ENCODE measurements at regions of chr1 and their contacts with region 1.

Region 1: DNA sequence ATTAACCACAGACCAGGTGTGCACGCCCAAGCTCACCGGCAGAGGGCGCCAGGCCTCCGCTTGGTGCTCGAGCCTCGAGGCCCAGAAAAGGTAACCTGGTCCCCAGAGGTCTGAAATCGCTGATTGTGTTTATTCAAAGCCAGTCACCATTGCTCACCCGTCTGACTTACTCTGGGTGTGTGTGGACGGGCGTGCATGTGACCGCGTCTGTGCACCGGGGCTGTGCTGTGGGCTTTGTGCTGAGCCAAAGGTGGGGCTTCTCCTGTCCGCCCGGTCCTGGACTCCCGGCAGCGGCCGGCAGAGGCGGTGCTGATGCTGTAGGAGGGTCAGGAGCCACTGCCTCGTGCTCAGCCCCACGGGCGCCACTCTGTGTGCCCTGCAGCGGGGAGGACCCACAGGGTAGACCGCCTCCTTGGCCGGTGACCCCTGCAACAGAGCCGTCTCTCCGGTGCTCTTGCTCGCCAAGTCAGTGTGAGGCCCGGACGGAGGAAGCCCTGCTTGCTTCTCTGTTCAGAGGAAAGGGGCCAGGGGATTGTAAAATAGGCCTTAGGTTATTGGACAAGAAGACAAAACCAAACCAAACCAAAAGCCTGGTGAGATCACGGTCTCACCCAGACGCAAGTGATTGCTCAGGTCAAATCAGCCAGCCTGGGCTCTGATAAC is 32.0 kb upstream of the BTG2 start:
- DNase-seq: peak; percentile 90
- ATAC-seq: peak; percentile 70
- H3K4me3 Mint-ChIP-seq: peak overlapping the region; percentile 59
- H3K27ac Mint-ChIP-seq: no peak overlapping the region
- H3K4me1 Mint-ChIP-seq: peaks cover 13% of the 10 kb centered on the region
- H3K27me3 Mint-ChIP-seq: peaks cover 47% of the 10 kb centered on the region
- CTCF ChIP-seq: peak; percentile 97

Region 2: DNA sequence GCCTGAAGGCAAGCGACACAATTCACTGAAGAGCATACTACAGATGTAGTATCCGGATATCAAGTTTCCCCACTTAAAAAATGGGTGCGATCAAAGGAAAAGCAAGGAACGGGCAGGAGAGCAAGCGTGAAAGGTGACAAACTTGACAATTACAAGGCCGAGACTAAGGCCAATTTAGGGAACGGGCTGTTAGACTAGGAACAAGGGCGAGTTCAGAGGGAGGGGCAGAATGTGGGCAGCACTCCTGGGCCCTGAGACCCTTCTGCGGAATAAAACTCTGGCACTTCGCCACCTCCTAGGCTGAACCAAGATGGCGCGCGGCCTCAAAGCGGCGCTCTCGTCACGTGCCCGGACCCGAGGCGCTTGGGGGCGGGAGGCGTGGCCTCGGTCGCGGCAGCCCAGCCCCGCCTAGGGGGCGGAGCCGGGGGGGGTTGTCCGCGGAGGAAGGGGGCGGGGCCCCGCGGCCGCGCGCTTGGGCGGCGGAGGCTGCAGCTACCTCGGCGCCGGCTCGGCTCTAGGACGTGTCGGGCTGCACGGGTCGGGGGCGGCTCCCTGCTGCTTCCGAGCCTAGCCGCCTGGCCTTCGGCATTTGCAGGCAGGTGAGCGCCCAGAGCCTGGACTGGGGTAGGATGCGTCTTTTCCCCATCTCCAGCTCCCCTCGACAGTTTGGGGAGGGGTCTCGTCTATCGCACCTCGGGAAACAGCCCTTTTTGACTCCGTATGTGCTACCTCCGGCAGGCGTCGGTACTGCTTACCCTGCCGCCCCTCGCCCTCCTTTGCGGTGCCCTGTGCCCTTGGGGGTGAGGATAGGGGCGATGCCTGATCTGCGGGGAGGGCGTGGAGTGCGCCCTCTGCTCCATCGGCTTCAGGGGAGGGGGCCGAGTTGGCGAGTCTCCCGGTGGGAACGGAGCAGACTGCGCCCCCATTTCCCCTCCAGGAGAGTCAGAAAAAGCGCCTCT is 247.0 kb before region 1 on chr1 and contains the start of gene PPFIA4:
- CTCF ChIA-PET with region 1: interaction called, 89 read pairs
- POLR2A ChIA-PET with region 1: interaction called, 7 read pairs
- DNase-seq: peak; percentile 88
- ATAC-seq: peak; percentile 82
- H3K4me3 Mint-ChIP-seq: peak within 1 kb of the TSS; percentile 77
- H3K27ac Mint-ChIP-seq: no peak within 1 kb of the TSS
- H3K4me1 Mint-ChIP-seq: peaks cover 15% of the 10 kb centered on the region
- H3K27me3 Mint-ChIP-seq: peaks cover 29% of the 10 kb centered on the region
- CTCF ChIP-seq: no peak
- total RNA-seq, gene PPFIA4: 21.1 to 24.9 TPM (median 22.7 TPM) in 3 replicates

Region 3: DNA sequence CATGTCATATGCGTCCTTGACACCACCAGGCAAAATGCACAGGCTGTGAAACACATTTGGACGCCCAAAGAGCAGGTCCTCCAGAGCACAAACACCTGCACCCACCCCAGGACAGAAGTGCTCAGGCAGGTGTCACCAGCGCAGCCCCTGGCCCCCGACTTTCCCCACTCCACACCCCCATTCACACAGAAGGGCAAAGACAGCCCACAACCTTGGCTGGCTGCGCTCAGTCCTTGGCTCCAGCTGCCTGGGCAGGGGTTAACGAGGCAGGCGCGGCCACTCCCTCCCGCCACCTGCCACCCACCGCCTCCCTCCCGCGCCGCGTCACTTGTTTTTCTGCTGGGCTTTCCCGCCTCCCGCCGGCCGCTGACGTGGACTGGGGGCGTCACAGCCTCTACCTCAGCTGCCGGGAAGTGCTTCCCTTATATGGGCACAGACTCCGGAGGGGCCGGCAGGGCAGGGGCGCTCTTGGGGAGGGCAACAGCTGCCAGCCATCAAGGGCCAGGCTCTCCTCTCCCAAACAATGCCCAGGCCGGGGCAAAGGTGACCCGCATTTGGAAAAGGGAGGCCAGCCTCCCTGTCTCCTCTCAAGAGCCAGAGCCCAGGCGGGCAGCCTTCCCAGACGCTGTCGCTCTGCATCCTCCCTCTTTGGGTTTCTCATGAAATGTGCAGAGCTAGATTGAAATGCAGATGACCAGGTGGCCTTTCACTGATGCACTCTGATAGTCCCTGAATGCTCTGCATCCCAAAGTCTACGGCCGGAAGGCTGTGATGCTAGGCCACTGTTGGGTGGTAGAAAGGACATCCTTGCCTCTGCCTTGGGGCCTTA is 17.1 kb after region 1 on chr1:
- CTCF ChIA-PET with region 1: interaction called, 78 read pairs
- POLR2A ChIA-PET with region 1: interaction called, 5 read pairs
- DNase-seq: peak; percentile 93
- ATAC-seq: peak; percentile 83
- H3K4me3 Mint-ChIP-seq: peak overlapping the region; percentile 63
- H3K27ac Mint-ChIP-seq: peak overlapping the region; percentile 97
- H3K4me1 Mint-ChIP-seq: peaks cover 55% of the 10 kb centered on the region
- H3K27me3 Mint-ChIP-seq: peaks cover 64% of the 10 kb centered on the region
- CTCF ChIP-seq: no peak

Region 4: DNA sequence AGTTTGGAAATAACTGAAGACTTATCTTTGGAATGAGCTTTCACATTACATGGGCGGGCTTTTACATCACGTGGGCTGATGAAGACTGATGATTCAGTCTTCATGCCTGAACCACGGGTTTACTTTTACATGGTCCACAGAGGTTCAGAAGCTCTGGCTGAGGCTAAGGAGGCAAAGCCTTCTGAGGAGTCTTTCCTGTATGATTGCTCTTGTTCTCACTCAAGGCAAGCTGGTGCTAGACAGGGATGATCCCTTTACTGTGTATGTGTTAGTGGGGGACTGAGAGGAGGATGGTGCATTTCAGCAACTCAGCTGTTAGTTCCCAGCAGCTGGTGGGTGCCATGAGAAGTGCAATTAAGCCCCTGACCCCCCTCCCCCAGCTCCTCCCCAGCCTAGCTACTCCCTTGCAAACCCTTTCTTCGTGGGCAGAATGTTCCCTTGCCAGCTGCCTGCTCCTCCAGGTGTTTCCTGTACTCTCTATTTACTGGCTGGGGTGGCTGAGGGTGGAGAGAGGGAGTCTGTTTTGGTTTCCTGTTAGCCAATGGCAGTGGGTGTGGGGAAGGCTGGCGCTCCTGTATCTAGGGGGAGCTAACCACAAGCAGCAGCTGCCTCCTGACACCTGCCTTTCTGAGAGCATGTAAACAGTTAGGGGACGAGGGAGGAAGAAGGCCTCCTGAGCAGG is 47.4 kb after region 1 on chr1:
- CTCF ChIA-PET with region 1: interaction called, 99 read pairs
- POLR2A ChIA-PET with region 1: interaction called, 3 read pairs
- DNase-seq: peak; percentile 63
- ATAC-seq: peak; percentile 97
- H3K4me3 Mint-ChIP-seq: no peak overlapping the region
- H3K27ac Mint-ChIP-seq: no peak overlapping the region
- H3K4me1 Mint-ChIP-seq: peaks cover 36% of the 10 kb centered on the region
- H3K27me3 Mint-ChIP-seq: peaks cover 96% of the 10 kb centered on the region
- CTCF ChIP-seq: no peak

Region 5: DNA sequence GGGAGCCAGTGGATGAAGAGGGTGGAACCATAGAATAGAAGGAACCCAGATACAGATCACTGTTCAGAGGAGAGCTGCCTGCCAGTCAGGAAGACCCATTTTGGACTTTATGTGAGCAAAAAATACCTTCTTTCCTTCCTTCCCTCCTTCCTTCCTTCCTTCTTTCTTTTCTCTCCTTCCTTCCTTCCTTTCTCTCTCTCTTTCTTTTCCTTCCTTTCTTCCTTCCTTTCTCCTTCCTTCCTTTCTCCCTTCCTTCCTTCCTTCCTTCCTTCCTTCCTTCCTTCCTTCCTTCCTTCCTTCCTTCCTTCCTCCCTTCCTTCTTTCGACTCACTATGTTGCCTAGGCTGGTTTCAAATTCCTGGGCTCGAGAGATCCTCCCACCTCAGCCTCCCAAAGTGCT is 99.7 kb after region 1 on chr1:
- CTCF ChIA-PET with region 1: no interaction called
- POLR2A ChIA-PET with region 1: no interaction called
- DNase-seq: no peak
- ATAC-seq: no peak
- H3K4me3 Mint-ChIP-seq: no peak overlapping the region
- H3K27ac Mint-ChIP-seq: no peak overlapping the region
- H3K4me1 Mint-ChIP-seq: no peaks in the 10 kb centered on the region
- H3K27me3 Mint-ChIP-seq: peaks cover 5% of the 10 kb centered on the region
- CTCF ChIP-seq: no peak

Region 6: GRCh38 chr1:203475012-203475981 is 202.0 kb after region 1 on chr1 and contains the start of gene PRELP:
- CTCF ChIA-PET with region 1: interaction called, 24 read pairs
- POLR2A ChIA-PET with region 1: no interaction called
- DNase-seq: peak; percentile 62
- ATAC-seq: peak; percentile 91
- H3K4me3 Mint-ChIP-seq: peak within 1 kb of the TSS; percentile 32
- H3K27ac Mint-ChIP-seq: no peak within 1 kb of the TSS
- H3K4me1 Mint-ChIP-seq: peaks cover 21% of the 10 kb centered on the region
- H3K27me3 Mint-ChIP-seq: no peaks in the 10 kb centered on the region; the same call in 1 of the 2 replicates
- CTCF ChIP-seq: no peak
- total RNA-seq, gene PRELP: 0.17 to 0.23 TPM (median 0.18 TPM) in 3 replicates